ENCODE measurements at regions of chr6 and their contacts with region 1.

Region 1: GRCh38 chr6:92647625-92648024 is 771.7 kb downstream of the EPHA7 start:
- DNase-seq: no peak
- H3K4me3 ChIP-seq: no peak overlapping the region
- H3K27ac ChIP-seq: no peak overlapping the region
- H3K4me1 ChIP-seq: no peaks in the 10 kb centered on the region
- H3K27me3 ChIP-seq: no peaks in the 10 kb centered on the region
- CTCF ChIP-seq: no peak
- POLR2A ChIP-seq: no peak

Region 2: DNA sequence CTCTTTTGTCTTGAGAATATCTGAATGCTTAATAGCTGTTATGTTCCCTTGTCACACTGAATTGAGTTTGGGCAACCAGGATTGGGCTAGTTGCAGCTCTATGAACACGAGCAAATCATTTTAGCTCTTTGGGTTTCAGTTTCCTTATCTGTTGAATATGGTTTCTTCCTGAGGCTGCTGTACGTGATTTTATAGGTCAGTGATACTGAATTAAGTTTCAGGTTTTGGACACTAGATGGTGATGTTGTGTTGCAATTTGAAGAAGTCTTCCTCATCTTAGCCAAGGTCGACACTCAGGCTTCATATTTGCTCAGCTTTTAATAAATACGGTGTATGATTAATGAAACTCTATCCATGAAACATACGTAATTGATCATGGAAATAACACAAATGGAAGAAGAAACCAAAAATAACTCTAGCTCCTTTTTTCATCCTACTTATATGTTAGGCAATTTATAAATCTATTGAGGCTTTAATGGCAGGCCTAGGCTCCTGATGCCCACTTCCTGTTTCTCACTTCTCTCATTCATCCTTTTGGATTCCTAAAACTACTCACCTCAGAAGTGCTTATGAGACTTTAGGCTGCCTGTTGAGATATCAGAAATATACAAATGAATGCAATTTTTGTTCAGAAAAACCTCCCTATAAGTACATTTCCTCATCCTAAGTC is 1706.7 kb before region 1 on chr6:
- CTCF ChIA-PET with region 1: interaction called, 3 read pairs
- POLR2A ChIA-PET with region 1: no interaction called
- dilution Hi-C with region 1: no loop called
- intact Hi-C with region 1: loop called (anchors 5 kb)
- DNase-seq: peak; percentile 75
- H3K4me3 ChIP-seq: no peak overlapping the region
- H3K27ac ChIP-seq: no peak overlapping the region
- H3K4me1 ChIP-seq: no peaks in the 10 kb centered on the region
- H3K27me3 ChIP-seq: peaks cover 0 to 2% of the 10 kb centered on the region in 2 experiments
- CTCF ChIP-seq: peak; percentile 25 to 35
- POLR2A ChIP-seq: no peak

Region 3: GRCh38 chr6:91081452-91082067 is 1566.1 kb before region 1 on chr6:
- CTCF ChIA-PET with region 1: interaction called, 26 read pairs
- POLR2A ChIA-PET with region 1: no interaction called
- dilution Hi-C with region 1: no loop called
- intact Hi-C with region 1: loop called (anchors 1 kb)
- DNase-seq: peak; percentile 52
- H3K4me3 ChIP-seq: no peak overlapping the region
- H3K27ac ChIP-seq: no peak overlapping the region
- H3K4me1 ChIP-seq: no peaks in the 10 kb centered on the region
- H3K27me3 ChIP-seq: no peaks in the 10 kb centered on the region
- CTCF ChIP-seq: peak; percentile 39 to 47
- POLR2A ChIP-seq: no peak

Region 4: DNA sequence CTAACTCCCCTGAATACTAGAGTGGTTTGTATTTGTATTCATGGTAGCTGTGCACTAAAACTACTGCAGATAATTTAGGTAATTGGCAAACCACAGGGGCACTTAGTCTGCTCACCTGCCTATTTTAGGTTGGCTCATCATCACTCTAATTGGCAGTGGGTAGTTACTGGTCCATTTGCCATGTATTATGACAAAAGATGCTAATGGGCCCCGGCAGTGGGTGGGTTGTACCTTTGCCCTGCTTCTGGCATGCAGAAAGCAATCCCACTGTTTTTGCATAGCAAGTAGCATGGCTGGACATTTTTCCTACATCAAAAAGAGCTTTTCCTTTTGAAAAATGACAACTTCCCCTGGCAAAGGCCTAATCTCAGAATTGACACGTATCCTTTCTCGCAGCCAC is 1319.4 kb before region 1 on chr6:
- CTCF ChIA-PET with region 1: interaction called, 10 read pairs
- POLR2A ChIA-PET with region 1: no interaction called
- dilution Hi-C with region 1: no loop called
- intact Hi-C with region 1: loop called (anchors 1 kb)
- DNase-seq: no peak
- H3K4me3 ChIP-seq: no peak overlapping the region
- H3K27ac ChIP-seq: no peak overlapping the region
- H3K4me1 ChIP-seq: no peaks in the 10 kb centered on the region
- H3K27me3 ChIP-seq: no peaks in the 10 kb centered on the region
- CTCF ChIP-seq: no peak
- POLR2A ChIP-seq: no peak

Region 5: GRCh38 chr6:92122746-92123145 is 524.9 kb before region 1 on chr6:
- CTCF ChIA-PET with region 1: interaction called, 117 read pairs
- POLR2A ChIA-PET with region 1: no interaction called
- dilution Hi-C with region 1: no loop called
- intact Hi-C with region 1: loop called (anchors 1 kb)
- DNase-seq: peak; percentile 44
- H3K4me3 ChIP-seq: no peak overlapping the region
- H3K27ac ChIP-seq: no peak overlapping the region
- H3K4me1 ChIP-seq: no peaks in the 10 kb centered on the region
- H3K27me3 ChIP-seq: no peaks in the 10 kb centered on the region
- CTCF ChIP-seq: peak in 1 of 2 donors; percentile 31
- POLR2A ChIP-seq: no peak

Region 6: GRCh38 chr6:92354270-92354831 is 293.3 kb before region 1 on chr6:
- CTCF ChIA-PET with region 1: interaction called, 3 read pairs
- POLR2A ChIA-PET with region 1: no interaction called
- dilution Hi-C with region 1: no loop called
- intact Hi-C with region 1: loop called (anchors 10 kb)
- DNase-seq: no peak
- H3K4me3 ChIP-seq: no peak overlapping the region
- H3K27ac ChIP-seq: no peak overlapping the region
- H3K4me1 ChIP-seq: no peaks in the 10 kb centered on the region
- H3K27me3 ChIP-seq: no peaks in the 10 kb centered on the region
- CTCF ChIP-seq: no peak
- POLR2A ChIP-seq: no peak

Region 7: GRCh38 chr6:92541457-92542060 is 106.1 kb before region 1 on chr6:
- CTCF ChIA-PET with region 1: interaction called, 6 read pairs
- POLR2A ChIA-PET with region 1: no interaction called
- dilution Hi-C with region 1: no loop called
- intact Hi-C with region 1: loop called (anchors 5 kb)
- DNase-seq: no peak
- H3K4me3 ChIP-seq: no peak overlapping the region
- H3K27ac ChIP-seq: no peak overlapping the region
- H3K4me1 ChIP-seq: peaks cover 49% of the 10 kb centered on the region
- H3K27me3 ChIP-seq: no peaks in the 10 kb centered on the region
- CTCF ChIP-seq: no peak
- POLR2A ChIP-seq: no peak